Left cardiac atrium (tissue), 4 donors: ENCODE measurements at regions of chr15 and their contacts with region 1.

Region 1: DNA sequence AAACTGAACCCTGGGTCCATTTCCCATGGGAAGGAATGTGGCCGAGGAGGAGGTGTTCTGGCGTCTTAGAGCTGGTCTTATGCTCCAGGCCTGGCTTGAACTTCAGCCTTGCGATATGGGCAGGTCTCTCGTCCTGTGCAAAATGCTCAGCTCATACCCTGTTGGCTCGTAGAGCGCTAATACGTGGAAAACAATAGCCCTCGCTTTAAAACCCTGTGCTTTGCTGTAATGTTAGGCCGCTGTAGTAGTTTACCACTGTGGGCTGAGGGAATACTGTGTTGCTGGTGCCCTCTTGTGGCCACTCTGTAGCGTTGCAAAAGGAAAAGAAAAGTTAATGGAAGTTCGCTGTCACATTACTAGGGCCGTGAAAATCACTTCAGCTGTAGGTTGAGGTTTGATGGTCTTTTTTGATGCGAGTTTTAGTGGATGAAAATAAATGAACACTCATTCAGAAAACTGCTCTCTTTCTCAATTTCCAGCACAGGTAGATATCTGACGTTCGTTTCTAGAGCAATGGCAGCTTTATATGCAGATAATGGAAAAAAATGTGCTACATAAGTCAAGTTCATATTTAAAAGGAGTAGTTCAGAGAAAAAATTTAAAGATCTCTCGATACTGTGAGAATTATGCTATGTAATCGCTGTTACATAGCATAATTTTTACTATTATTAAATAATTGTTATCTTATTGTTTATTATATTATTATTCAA is 92.9 kb downstream of the MCTP2 start:
- DNase-seq: peak; percentile 28
- ATAC-seq: peak; percentile 86 to 91

Region 2: GRCh38 chr15:93265111-93265556 is 1059.1 kb before region 1 on chr15:
- intact Hi-C with region 1: no loop called
- DNase-seq: no peak
- ATAC-seq: peak in 1 of 2 donors; percentile 92

Region 3: GRCh38 chr15:93813011-93813410 is 511.3 kb before region 1 on chr15:
- intact Hi-C with region 1: no loop called
- DNase-seq: no peak
- ATAC-seq: no peak

Region 4: GRCh38 chr15:94163999-94164807 is 160.1 kb before region 1 on chr15:
- intact Hi-C with region 1: loop called (anchors 1 to 5 kb)
- DNase-seq: peak; percentile 34
- ATAC-seq: peak in 1 of 2 donors; percentile 69